HEK293 (cell line): ENCODE measurements at regions of chr5 and their contacts with region 1.

Region 1: GRCh38 chr5:32193591-32193990 is 19.5 kb upstream of the GOLPH3 start:
- H3K4me3 ChIP-seq: peak overlapping the region; percentile 6; the same call in 1 of the 2 replicates
- H3K27ac ChIP-seq: peak overlapping the region; percentile 42
- H3K4me1 ChIP-seq: peaks cover 11% of the 10 kb centered on the region
- CTCF ChIP-seq: no peak

Region 2: DNA sequence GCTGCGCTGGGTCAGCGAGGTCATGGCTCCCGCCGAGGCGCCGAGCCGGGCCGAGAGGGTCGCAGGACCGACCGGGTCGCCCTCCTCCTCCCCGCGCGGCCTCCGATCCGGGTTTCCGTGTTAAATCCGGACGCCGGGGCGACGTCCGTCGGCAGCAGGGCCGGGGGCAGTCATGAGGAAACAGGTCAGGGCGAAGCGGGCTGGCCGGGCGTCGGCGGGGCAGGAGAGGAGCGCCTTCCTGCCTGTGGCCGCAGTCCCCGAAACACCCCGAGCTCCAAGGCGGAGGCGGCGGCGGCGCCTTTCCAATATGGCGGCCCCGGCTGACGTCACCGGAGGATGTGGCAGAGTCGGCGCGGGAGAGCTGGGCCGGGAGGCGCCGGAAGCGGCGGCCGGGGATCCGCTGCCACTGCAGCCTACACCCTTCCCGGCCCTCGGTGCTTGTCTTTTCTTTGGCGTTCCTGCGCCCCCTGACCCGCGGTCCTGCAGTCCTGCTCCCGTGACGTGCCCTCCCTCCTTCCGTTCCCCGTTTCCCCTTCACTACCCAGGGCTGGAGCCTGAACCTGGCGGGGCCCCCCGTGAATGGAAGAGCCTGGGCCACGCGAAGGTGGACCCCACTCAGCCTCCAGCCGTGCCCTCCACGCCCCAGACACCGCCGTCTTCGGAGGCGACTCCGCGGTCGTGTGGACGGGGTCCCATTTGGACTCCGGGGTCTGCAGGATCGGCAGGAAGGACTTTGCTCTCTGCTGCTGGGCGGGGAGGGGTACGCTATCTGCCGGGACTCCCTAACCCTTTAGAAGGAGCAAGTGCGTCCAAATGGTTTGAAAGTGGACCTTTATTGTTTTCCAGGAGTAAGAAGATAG is 19.4 kb before region 1 on chr5 and contains the start of gene GOLPH3:
- CTCF ChIA-PET with region 1: interaction called, 5 read pairs
- POLR2A ChIA-PET with region 1: interaction called, 13 read pairs
- H3K4me3 ChIP-seq: peak within 1 kb of the TSS; percentile 93
- H3K27ac ChIP-seq: peak within 1 kb of the TSS; percentile 100
- H3K4me1 ChIP-seq: peaks cover 16% of the 10 kb centered on the region
- CTCF ChIP-seq: peak; percentile 89; the same call in 1 of the 2 replicates

Region 3: GRCh38 chr5:32251871-32252458 is 58.4 kb after region 1 on chr5:
- CTCF ChIA-PET with region 1: interaction called, 10 read pairs
- POLR2A ChIA-PET with region 1: no interaction called
- H3K4me3 ChIP-seq: no peak overlapping the region
- H3K27ac ChIP-seq: no peak overlapping the region
- H3K4me1 ChIP-seq: peaks cover 3% of the 10 kb centered on the region; the same call in 1 of the 2 replicates
- CTCF ChIP-seq: no peak